ENCODE measurements at regions of chr4 and their contacts with region 1.

Region 1: GRCh38 chr4:93791570-93792195 is 36.9 kb upstream of the ATOH1 start:
- DNase-seq: peak in 1 of 5 donors; percentile 18
- ATAC-seq: peak in 3 of 4 donors; percentile 30 to 68 (median 56)
- H3K4me3 ChIP-seq: no peak overlapping the region
- H3K27ac ChIP-seq: no peak overlapping the region
- H3K4me1 ChIP-seq: no peaks in the 10 kb centered on the region
- H3K27me3 ChIP-seq: peaks cover 0 to 4% (median 0%) of the 10 kb centered on the region in 9 donors
- CTCF ChIP-seq: peak; percentile 50 to 82 (median 74)
- POLR2A ChIP-seq: no peak

Region 2: GRCh38 chr4:94127707-94128328 is 336.1 kb after region 1 on chr4:
- intact Hi-C with region 1: loop called in 9 of 10 experiments (anchors 2 to 10 kb)
- DNase-seq: no peak
- ATAC-seq: no peak
- H3K4me3 ChIP-seq: no peak overlapping the region
- H3K27ac ChIP-seq: no peak overlapping the region
- H3K4me1 ChIP-seq: no peaks in the 10 kb centered on the region
- H3K27me3 ChIP-seq: no peaks in the 10 kb centered on the region
- CTCF ChIP-seq: peak in 11 of 12 donors; percentile 32 to 66 (median 49)
- POLR2A ChIP-seq: no peak

Region 3: GRCh38 chr4:94256828-94257227 is 465.1 kb after region 1 on chr4:
- intact Hi-C with region 1: loop called in 5 of 10 experiments (anchors 5 to 10 kb)
- DNase-seq: no peak
- ATAC-seq: no peak
- H3K4me3 ChIP-seq: no peak overlapping the region
- H3K27ac ChIP-seq: no peak overlapping the region
- H3K4me1 ChIP-seq: no peaks in the 10 kb centered on the region
- H3K27me3 ChIP-seq: no peaks in the 10 kb centered on the region
- CTCF ChIP-seq: peak in 7 of 12 donors; percentile 15 to 37 (median 25)
- POLR2A ChIP-seq: no peak

Region 4: GRCh38 chr4:94390804-94391410 is 599.2 kb after region 1 on chr4:
- intact Hi-C with region 1: loop called in 1 of 10 experiments (anchors 10 kb)
- DNase-seq: no peak
- ATAC-seq: no peak
- H3K4me3 ChIP-seq: no peak overlapping the region
- H3K27ac ChIP-seq: no peak overlapping the region
- H3K4me1 ChIP-seq: peaks cover 0 to 8% (median 0%) of the 10 kb centered on the region in 12 donors
- H3K27me3 ChIP-seq: no peaks in the 10 kb centered on the region
- CTCF ChIP-seq: peak in 11 of 12 donors; percentile 19 to 54 (median 46)
- POLR2A ChIP-seq: no peak

Measured in heart left ventricle (tissue), 16 donors.